Heart right ventricle (tissue), 16 donors: ENCODE measurements at regions of chr6 and their contacts with region 1.

Region 1: DNA sequence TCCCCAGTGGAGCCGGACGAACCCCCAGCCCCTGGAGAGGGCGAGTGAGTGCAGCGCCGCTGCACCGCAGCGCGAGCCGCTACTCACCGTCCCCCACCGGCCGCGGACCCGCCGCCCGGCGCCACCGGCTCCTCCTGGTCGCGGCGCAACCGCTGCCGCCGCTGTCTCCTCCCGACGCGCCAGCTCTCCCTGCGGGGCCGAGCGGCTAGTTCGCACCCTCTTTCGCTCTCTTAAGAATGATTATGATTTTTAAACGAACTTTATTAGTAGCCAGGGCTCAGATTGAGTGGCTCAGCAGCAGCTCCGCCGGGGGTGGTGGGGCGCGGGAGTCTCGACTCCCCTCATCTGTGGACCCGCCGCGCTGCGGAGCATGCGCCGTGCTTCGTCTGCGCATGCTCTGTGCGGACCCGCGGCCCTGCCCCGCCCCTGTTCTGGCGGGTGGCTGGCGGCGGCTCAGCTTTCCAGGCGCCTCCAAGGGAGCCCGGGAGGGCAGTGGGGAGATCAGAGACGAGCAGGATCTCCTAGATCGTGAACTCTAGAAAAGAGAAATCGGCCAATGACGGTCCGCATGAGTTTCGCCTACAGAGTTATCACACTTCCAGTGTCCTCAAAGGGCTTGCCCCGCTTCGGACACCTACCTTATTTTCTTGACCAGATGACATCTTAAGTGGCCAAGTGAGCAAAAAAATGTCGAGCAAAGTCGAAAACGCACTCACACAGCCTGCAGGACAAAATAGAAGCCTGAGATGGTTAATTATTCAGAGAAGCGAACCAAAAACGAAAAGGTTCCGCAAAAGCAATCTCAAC is at the start of gene RAB23:
- DNase-seq: peak; percentile 83 to 88
- ATAC-seq: peak; percentile 98 to 99 (median 99)
- H3K4me3 ChIP-seq: peak within 1 kb of the TSS; percentile 90 to 99 (median 95)
- H3K27ac ChIP-seq: peak within 1 kb of the TSS; percentile 76 to 90 (median 86)
- H3K4me1 ChIP-seq: peaks cover 0 to 14% (median 5%) of the 10 kb centered on the region in 9 donors
- H3K27me3 ChIP-seq: no peaks in the 10 kb centered on the region
- CTCF ChIP-seq: peak in 4 of 9 donors; percentile 8 to 24 (median 19)
- total RNA-seq, gene RAB23: 7.6 to 16.5 (median 10.9) TPM

Region 2: GRCh38 chr6:57089687-57090460 is 132.3 kb before region 1 on chr6 and contains the start of gene ZNF451:
- intact Hi-C with region 1: loop called in 2 of 10 experiments (anchors 10 kb)
- DNase-seq: peak; percentile 98 to 99
- ATAC-seq: peak; percentile 98 to 99 (median 99)
- H3K4me3 ChIP-seq: peak within 1 kb of the TSS; percentile 40 to 76 (median 66)
- H3K27ac ChIP-seq: peak within 1 kb of the TSS; percentile 57 to 93 (median 86)
- H3K4me1 ChIP-seq: peaks cover 5 to 41% (median 37%) of the 10 kb centered on the region in 9 donors
- H3K27me3 ChIP-seq: no peaks in the 10 kb centered on the region
- CTCF ChIP-seq: peak in 2 of 9 donors; percentile 9 to 18
- total RNA-seq, gene ZNF451: 19.8 to 33.2 (median 26.8) TPM

Region 3: GRCh38 chr6:57108691-57109090 is 113.4 kb before region 1 on chr6:
- intact Hi-C with region 1: loop called in 1 of 10 experiments (anchors 10 kb)
- DNase-seq: no peak
- ATAC-seq: no peak
- H3K4me3 ChIP-seq: no peak overlapping the region
- H3K27ac ChIP-seq: no peak overlapping the region
- H3K4me1 ChIP-seq: peaks cover 0 to 32% (median 0%) of the 10 kb centered on the region in 9 donors
- H3K27me3 ChIP-seq: no peaks in the 10 kb centered on the region
- CTCF ChIP-seq: no peak

Region 4: GRCh38 chr6:57172136-57173055 is 49.7 kb before region 1 on chr6 and contains the start of gene BAG2:
- intact Hi-C with region 1: loop called in 4 of 10 experiments (anchors 5 kb)
- DNase-seq: peak; percentile 85 to 87
- ATAC-seq: peak; percentile 94 to 98 (median 95)
- H3K4me3 ChIP-seq: peak within 1 kb of the TSS; percentile 57 to 80 (median 76)
- H3K27ac ChIP-seq: peak within 1 kb of the TSS; percentile 88 to 98 (median 91)
- H3K4me1 ChIP-seq: peaks cover 0 to 39% (median 19%) of the 10 kb centered on the region in 9 donors
- H3K27me3 ChIP-seq: no peaks in the 10 kb centered on the region
- CTCF ChIP-seq: peak in 5 of 9 donors; percentile 7 to 46 (median 27)
- total RNA-seq, gene BAG2: 7.2 to 15.6 (median 9.7) TPM

Region 5: GRCh38 chr6:57177545-57178265 is 44.4 kb before region 1 on chr6:
- intact Hi-C with region 1: loop called in 4 of 10 experiments (anchors 5 kb)
- DNase-seq: peak; percentile 24 to 58
- ATAC-seq: peak; percentile 68 to 88 (median 75)
- H3K4me3 ChIP-seq: peak overlapping the region in 7 of 10 donors; percentile 12 to 41 (median 32)
- H3K27ac ChIP-seq: peak overlapping the region; percentile 4 to 92 (median 72)
- H3K4me1 ChIP-seq: peaks cover 3 to 63% (median 31%) of the 10 kb centered on the region in 9 donors
- H3K27me3 ChIP-seq: no peaks in the 10 kb centered on the region
- CTCF ChIP-seq: no peak

Region 6: GRCh38 chr6:57257911-57258541 is 35.9 kb after region 1 on chr6:
- intact Hi-C with region 1: loop called in 1 of 10 experiments (anchors 5 kb)
- DNase-seq: no peak
- ATAC-seq: peak in 7 of 8 donors; percentile 21 to 72 (median 50)
- H3K4me3 ChIP-seq: peak overlapping the region in 4 of 10 donors; percentile 3 to 13 (median 10)
- H3K27ac ChIP-seq: peak overlapping the region in 9 of 10 donors; percentile 35 to 79 (median 70)
- H3K4me1 ChIP-seq: peaks cover 0 to 17% (median 0%) of the 10 kb centered on the region in 9 donors
- H3K27me3 ChIP-seq: no peaks in the 10 kb centered on the region
- CTCF ChIP-seq: no peak